H1 (cell line): ENCODE measurements at regions of chr1 and their contacts with region 1.

Region 1: GRCh38 chr1:153220606-153221303 is 3.4 kb downstream of the PRR9 start:
- DNase-seq: no peak
- H3K4me3 ChIP-seq: no peak overlapping the region
- H3K27ac ChIP-seq: no peak overlapping the region
- H3K4me1 ChIP-seq: no peaks in the 10 kb centered on the region
- H3K27me3 ChIP-seq: no peaks in the 10 kb centered on the region; a peak in 2 of 7 replicates
- CTCF ChIP-seq: no peak
- EP300 ChIP-seq: no peak
- POLR2A ChIP-seq: no peak
- RAD21 ChIP-seq: no peak

Region 2: GRCh38 chr1:152993186-152993585 is 227.6 kb before region 1 on chr1:
- CTCF ChIA-PET with region 1: no interaction called
- POLR2A ChIA-PET with region 1: no interaction called
- DNase-seq: no peak
- H3K4me3 ChIP-seq: no peak overlapping the region
- H3K27ac ChIP-seq: no peak overlapping the region
- H3K4me1 ChIP-seq: peaks cover 0 to 4% (median 2%) of the 10 kb centered on the region in 4 experiments; a peak in 1 of 7 replicates
- H3K27me3 ChIP-seq: no peaks in the 10 kb centered on the region
- CTCF ChIP-seq: no peak
- EP300 ChIP-seq: no peak
- POLR2A ChIP-seq: no peak
- RAD21 ChIP-seq: no peak

Region 3: DNA sequence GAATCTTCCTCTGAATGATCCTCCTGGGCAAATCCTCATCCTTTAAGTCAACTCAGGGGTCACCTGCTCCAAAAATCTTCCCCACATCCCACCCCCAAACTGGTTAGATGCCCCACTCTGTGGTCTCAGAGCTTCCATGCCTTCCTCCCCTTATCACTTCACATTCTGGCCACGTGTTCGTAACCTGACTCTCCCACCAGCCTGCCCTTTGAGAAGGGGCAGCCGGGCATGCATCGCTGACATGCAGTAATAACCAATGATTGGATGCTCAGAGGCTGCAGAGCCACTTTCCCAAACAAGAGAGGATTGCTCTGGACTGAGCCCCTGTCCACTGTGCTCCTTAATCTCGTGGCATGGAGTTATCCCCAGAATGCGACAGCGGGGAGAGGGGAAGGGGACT is 10.5 kb before region 1 on chr1:
- CTCF ChIA-PET with region 1: interaction called, 13 read pairs
- POLR2A ChIA-PET with region 1: no interaction called
- DNase-seq: no peak
- H3K4me3 ChIP-seq: no peak overlapping the region
- H3K27ac ChIP-seq: no peak overlapping the region
- H3K4me1 ChIP-seq: peaks cover 0 to 3% (median 0%) of the 10 kb centered on the region in 4 experiments; a peak in 1 of 7 replicates
- H3K27me3 ChIP-seq: no peaks in the 10 kb centered on the region
- CTCF ChIP-seq: no peak
- EP300 ChIP-seq: no peak
- POLR2A ChIP-seq: no peak
- RAD21 ChIP-seq: no peak

Region 4: GRCh38 chr1:153231363-153231762 is 10.6 kb after region 1 on chr1:
- CTCF ChIA-PET with region 1: interaction called, 21 read pairs
- POLR2A ChIA-PET with region 1: no interaction called
- DNase-seq: no peak
- H3K4me3 ChIP-seq: no peak overlapping the region
- H3K27ac ChIP-seq: no peak overlapping the region
- H3K4me1 ChIP-seq: no peaks in the 10 kb centered on the region
- H3K27me3 ChIP-seq: no peaks in the 10 kb centered on the region
- CTCF ChIP-seq: no peak
- EP300 ChIP-seq: no peak
- POLR2A ChIP-seq: no peak
- RAD21 ChIP-seq: no peak